ENCODE measurements at regions of chr17 and their contacts with region 1.

Region 1: DNA sequence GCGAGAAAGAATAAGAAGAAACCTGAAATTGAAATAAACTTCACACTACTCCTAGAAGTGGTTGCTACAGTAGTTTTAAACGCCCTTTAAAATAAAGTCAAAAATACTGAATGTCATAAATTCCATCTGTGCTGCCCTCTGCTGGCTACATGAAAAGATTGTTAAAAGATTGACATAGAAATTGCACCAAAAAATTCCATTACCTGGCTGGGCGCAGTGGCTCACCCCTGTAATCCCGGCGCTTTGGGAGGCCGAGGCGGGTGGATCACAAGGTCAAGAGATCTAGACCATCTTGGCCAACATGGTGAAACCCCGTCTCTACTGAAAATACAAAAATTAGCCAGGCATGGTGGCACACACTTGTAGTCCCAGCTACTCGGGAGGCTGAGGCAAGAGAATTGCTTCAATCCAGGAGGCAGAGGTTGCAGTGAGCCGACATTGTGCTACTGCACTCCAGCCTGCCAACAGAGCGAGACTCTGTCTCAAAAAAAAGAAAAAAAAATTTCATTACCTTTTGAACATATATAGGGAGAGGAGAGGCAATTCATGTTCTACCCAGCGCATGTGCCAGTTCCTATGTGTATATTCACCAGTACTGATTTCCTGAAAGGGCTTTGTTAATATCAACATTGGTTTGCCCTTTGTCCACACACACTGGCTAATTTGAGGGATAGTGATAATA is 36.5 kb downstream of the CYTH1 start:
- DNase-seq: peak in 1 of 2 donors; percentile 54
- ATAC-seq: no peak
- H3K4me3 ChIP-seq: no peak overlapping the region
- H3K27ac ChIP-seq: peak overlapping the region in 1 of 10 donors; percentile 87
- H3K4me1 ChIP-seq: peaks cover 10 to 92% (median 60%) of the 10 kb centered on the region in 9 donors
- H3K27me3 ChIP-seq: no peaks in the 10 kb centered on the region
- CTCF ChIP-seq: peak in 8 of 9 donors; percentile 58 to 75 (median 65)

Region 2: GRCh38 chr17:78611607-78612006 is 133.9 kb before region 1 on chr17:
- intact Hi-C with region 1: no loop called
- DNase-seq: peak in 1 of 2 donors; percentile 23
- ATAC-seq: peak in 6 of 8 donors; percentile 26 to 81 (median 71)
- H3K4me3 ChIP-seq: no peak overlapping the region
- H3K27ac ChIP-seq: no peak overlapping the region
- H3K4me1 ChIP-seq: peaks cover 0 to 17% (median 0%) of the 10 kb centered on the region in 9 donors
- H3K27me3 ChIP-seq: peaks cover 0 to 19% (median 0%) of the 10 kb centered on the region in 7 donors
- CTCF ChIP-seq: no peak

Region 3: DNA sequence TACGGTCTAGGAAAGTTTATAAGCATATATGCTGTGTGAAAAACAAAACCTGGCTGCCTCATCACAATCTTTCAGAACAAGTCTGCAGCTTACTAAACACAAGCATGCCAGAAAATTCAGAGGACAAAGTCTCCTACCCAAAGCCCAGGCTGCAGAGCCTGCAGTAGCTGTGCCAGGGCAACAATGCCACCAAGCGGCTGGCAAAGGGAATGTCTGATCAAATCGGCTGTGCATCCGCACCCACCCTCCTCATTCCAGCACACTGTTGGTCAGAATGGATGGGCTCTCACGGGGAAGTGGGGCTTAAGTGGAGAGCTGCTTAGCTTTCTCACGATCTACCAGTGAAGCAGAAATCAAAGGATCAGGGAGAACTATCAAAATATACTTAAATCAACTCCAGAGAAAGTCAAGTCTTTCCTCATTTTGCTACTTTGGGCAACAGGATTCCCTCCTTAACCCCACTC is 37.0 kb before region 1 on chr17:
- intact Hi-C with region 1: loop called in 2 of 10 experiments (anchors 5 kb)
- DNase-seq: peak; percentile 58 to 64
- ATAC-seq: peak; percentile 75 to 89 (median 88)
- H3K4me3 ChIP-seq: no peak overlapping the region
- H3K27ac ChIP-seq: peak overlapping the region in 2 of 10 donors; percentile 9 to 38
- H3K4me1 ChIP-seq: peaks cover 0 to 51% (median 31%) of the 10 kb centered on the region in 9 donors
- H3K27me3 ChIP-seq: no peaks in the 10 kb centered on the region
- CTCF ChIP-seq: peak; percentile 74 to 91 (median 83)

Region 4: DNA sequence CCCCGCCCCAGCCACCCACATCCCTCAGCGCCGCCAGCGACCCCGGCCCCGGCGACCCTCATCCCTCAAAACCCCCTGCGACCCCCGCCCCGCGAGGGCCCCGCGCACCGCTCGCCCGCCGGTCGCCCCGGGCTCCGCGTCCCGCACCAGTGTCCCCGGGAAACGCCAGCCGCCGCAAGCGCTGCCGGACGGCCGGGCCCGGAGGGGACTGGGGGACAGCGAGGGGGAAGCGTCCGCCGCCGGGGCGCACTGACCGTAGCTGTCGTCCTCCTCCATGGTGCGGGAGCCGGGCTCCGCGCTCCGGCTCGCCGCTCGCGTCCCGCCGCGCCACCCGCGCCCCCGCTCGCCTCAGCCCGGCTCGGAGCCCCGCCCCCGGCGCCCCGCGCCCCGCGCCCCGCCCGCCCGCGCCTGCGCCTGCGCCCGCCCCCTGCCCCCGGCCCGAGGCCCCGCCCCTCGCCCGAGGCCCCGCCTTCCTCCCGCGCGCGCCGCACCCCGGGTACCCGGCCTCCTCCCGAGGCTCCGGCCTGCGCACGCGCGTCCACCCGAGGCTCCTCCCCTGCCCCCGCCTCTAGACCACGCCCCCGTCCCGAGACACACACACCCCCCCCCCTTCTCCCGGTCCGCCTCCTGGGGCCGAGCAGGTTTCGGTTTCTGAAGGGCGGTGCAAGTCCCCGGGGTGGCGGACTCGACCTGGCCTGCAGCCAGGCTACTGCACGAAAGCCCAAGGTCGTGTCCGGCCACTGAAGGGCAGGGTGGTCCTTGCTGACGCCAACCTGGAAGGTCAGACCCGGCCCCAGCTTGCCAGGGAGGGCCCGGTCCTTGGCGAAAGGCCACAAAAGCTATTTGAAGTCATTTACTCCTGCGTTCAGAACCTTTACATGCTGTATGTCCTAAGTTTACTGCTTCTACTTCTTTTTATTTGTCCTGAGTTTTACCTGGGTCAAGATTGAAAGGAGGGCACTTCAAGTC is 36.7 kb after region 1 on chr17 and contains the start of gene CYTH1:
- intact Hi-C with region 1: loop called in 2 of 10 experiments (anchors 5 kb)
- DNase-seq: peak; percentile 97 to 98
- ATAC-seq: peak; percentile 94 to 97 (median 96)
- H3K4me3 ChIP-seq: peak within 1 kb of the TSS; percentile 86 to 99 (median 96)
- H3K27ac ChIP-seq: peak within 1 kb of the TSS; percentile 87 to 99 (median 96)
- H3K4me1 ChIP-seq: peaks cover 0 to 54% (median 25%) of the 10 kb centered on the region in 9 donors
- H3K27me3 ChIP-seq: no peaks in the 10 kb centered on the region
- CTCF ChIP-seq: no peak
- total RNA-seq, gene CYTH1: 23.5 to 46.9 (median 34.8) TPM

Measured in heart right ventricle (tissue), 16 donors.